PC-9 (cell line): ENCODE measurements at regions of chr17 and their contacts with region 1.

Region 1: GRCh38 chr17:75855310-75856081 is at the start of gene WBP2:
- DNase-seq: peak; percentile 96 to 100
- H3K4me3 ChIP-seq: peak within 1 kb of the TSS; percentile 74
- H3K27ac ChIP-seq: peak within 1 kb of the TSS; percentile 79
- H3K4me1 ChIP-seq: peaks cover 23% of the 10 kb centered on the region
- H3K27me3 ChIP-seq: no peaks in the 10 kb centered on the region
- CTCF ChIP-seq: peak; percentile 52
- total RNA-seq, gene WBP2: 114 and 159 TPM in 2 replicates

Region 2: GRCh38 chr17:75720725-75721462 is 134.6 kb before region 1 on chr17 and contains the start of gene ITGB4:
- CTCF ChIA-PET with region 1: interaction called, 10 read pairs
- POLR2A ChIA-PET with region 1: no interaction called
- intact Hi-C with region 1: no loop called
- DNase-seq: peak; percentile 80 to 95
- H3K4me3 ChIP-seq: peak within 1 kb of the TSS; percentile 96
- H3K27ac ChIP-seq: peak within 1 kb of the TSS; percentile 38
- H3K4me1 ChIP-seq: peaks cover 28% of the 10 kb centered on the region
- H3K27me3 ChIP-seq: no peaks in the 10 kb centered on the region
- CTCF ChIP-seq: no peak
- total RNA-seq, gene ITGB4: 448 and 461 TPM in 2 replicates

Region 3: DNA sequence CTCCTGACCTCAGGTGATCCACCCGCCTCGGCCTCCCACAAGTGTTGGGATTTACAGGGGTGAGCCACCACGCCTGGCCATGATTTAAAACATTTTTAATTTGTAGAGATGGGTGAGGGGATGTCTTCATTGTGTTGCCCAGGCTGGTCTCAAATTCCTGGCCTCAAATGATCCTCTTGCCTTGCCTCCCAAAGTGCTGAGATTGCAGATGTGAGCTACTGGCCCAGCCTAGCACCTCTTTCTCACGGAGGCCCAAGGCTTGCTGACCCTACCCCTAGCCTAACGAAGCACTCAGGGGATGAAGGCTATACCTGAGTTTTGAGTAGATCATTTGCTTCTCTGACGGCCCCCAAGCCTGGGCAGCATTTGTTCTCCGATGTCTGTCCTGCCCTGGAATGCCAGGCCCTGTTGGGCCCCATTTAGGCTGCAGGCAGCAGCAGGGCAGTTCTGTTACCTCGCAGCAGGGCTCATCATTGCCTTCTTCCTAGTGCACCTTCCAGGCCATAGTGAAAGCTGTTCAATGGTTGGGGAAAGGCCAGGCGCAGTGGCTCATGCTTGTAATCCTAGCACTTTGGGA is 44.2 kb before region 1 on chr17:
- CTCF ChIA-PET with region 1: no interaction called
- POLR2A ChIA-PET with region 1: no interaction called
- intact Hi-C with region 1: no loop called
- DNase-seq: no peak
- H3K4me3 ChIP-seq: no peak overlapping the region
- H3K27ac ChIP-seq: no peak overlapping the region
- H3K4me1 ChIP-seq: peaks cover 10% of the 10 kb centered on the region
- H3K27me3 ChIP-seq: no peaks in the 10 kb centered on the region
- CTCF ChIP-seq: no peak

Region 4: DNA sequence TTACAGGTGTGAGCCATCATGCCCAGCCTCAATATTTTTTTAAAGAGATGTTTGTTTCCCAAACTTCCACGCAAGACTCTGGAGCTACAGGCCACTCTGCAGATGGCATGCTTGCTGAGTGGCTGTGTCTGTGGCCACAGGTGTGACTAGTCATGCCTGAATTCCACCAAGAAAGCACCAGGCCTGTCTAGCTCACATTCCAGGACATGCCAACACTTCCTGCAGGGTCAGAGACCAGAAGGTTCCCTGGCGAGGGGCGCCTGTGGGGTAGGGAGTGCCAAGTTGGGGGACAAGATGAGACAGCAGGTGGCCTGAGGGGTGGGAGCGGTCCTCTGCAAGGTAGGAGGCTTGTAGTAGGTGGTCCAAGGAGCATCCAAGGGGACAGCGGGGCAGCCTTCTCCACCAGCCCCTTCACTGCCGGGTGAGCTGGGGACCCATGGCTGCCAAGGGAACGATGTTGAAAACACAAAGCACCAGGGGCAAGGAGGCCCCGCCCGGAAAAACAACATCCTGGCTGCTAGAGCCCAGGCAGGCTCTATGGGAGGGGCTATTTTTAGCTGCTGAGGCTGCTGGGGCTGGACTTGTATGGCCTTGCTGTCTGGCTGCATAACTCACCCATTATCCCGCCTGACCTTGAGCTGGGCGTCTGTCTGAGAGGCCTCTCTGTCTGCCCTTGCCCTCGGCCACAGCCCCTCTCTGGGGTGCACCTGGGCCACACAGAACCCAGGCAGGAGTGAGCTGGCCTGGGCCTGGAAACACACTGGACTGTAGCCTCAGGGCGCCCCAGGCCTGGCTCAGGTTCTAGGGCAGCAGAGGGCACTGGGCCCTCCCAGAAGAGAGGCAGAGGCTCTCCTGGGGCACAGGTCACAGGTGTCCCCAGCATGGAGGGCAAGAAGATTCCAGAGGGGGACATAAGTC is 17.2 kb after region 1 on chr17:
- CTCF ChIA-PET with region 1: interaction called, 18 read pairs
- POLR2A ChIA-PET with region 1: interaction called, 16 read pairs
- intact Hi-C with region 1: loop called (anchors 1 kb)
- DNase-seq: peak; percentile 84 to 87
- H3K4me3 ChIP-seq: no peak overlapping the region; the same call in 1 of the 2 replicates
- H3K27ac ChIP-seq: peak overlapping the region; percentile 58
- H3K4me1 ChIP-seq: peaks cover 46% of the 10 kb centered on the region
- H3K27me3 ChIP-seq: no peaks in the 10 kb centered on the region
- CTCF ChIP-seq: no peak

Region 5: GRCh38 chr17:75896415-75897159 is 41.1 kb after region 1 on chr17 and contains the start of gene TRIM65:
- CTCF ChIA-PET with region 1: no interaction called
- POLR2A ChIA-PET with region 1: interaction called, 4 read pairs
- intact Hi-C with region 1: loop called (anchors 1 kb)
- DNase-seq: peak; percentile 59 to 77
- H3K4me3 ChIP-seq: peak within 1 kb of the TSS; percentile 77
- H3K27ac ChIP-seq: peak within 1 kb of the TSS; percentile 33
- H3K4me1 ChIP-seq: 0 out of 2 replicates have a peak, but pooled peaks cover 4% of the 10 kb centered on the region
- H3K27me3 ChIP-seq: no peaks in the 10 kb centered on the region
- CTCF ChIP-seq: no peak
- total RNA-seq, gene TRIM65: 21.1 and 27.1 TPM in 2 replicates

Region 6: DNA sequence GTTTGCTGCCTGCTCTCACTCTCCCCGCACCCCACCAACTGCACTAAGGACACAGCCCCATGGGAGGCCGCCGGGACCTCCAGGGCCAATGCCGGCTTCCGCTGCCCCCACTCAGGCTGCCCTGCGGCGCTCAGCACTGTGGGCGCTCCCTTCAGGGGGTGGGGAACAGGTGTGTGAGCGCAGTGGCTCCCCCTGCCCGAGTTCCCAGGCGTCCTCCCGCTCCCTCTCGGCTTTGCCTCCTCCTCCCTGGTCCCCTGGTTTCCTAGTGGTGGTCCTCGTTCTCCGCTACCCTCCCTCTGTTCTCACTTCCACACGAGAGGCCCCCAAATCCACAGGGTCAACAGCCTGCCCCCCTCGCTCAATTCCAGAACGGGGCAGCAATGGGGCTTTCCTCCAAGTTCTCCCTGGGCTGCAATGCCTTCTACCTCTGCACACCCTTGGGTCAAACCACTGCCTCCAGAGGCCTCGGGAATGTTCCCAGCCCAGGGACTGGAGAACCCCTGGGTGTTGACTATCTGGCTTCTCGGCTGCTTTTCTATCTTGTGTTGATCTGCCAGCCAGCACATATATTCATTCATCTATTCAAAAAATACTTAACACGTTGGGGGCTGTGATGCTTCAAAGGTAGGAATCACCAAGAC is 275.7 kb after region 1 on chr17:
- CTCF ChIA-PET with region 1: no interaction called
- POLR2A ChIA-PET with region 1: no interaction called
- intact Hi-C with region 1: no loop called
- DNase-seq: no peak
- H3K4me3 ChIP-seq: no peak overlapping the region
- H3K27ac ChIP-seq: no peak overlapping the region
- H3K4me1 ChIP-seq: peaks cover 28% of the 10 kb centered on the region
- H3K27me3 ChIP-seq: no peaks in the 10 kb centered on the region
- CTCF ChIP-seq: no peak

Region 7: GRCh38 chr17:76141212-76142038 is 285.9 kb after region 1 on chr17 and contains the start of gene FOXJ1:
- CTCF ChIA-PET with region 1: no interaction called
- POLR2A ChIA-PET with region 1: interaction called, 29 read pairs
- intact Hi-C with region 1: no loop called
- DNase-seq: peak; percentile 78 to 95
- H3K4me3 ChIP-seq: 0 out of 2 replicates have a peak within 1 kb of the TSS, but pooled peaks have one; percentile 26
- H3K27ac ChIP-seq: no peak within 1 kb of the TSS
- H3K4me1 ChIP-seq: peaks cover 27% of the 10 kb centered on the region
- H3K27me3 ChIP-seq: no peaks in the 10 kb centered on the region
- CTCF ChIP-seq: no peak
- total RNA-seq, gene FOXJ1: 12.5 and 23.7 TPM in 2 replicates